PC-3 (cell line): ENCODE measurements at regions of chr10 and their contacts with region 1.

Region 1: DNA sequence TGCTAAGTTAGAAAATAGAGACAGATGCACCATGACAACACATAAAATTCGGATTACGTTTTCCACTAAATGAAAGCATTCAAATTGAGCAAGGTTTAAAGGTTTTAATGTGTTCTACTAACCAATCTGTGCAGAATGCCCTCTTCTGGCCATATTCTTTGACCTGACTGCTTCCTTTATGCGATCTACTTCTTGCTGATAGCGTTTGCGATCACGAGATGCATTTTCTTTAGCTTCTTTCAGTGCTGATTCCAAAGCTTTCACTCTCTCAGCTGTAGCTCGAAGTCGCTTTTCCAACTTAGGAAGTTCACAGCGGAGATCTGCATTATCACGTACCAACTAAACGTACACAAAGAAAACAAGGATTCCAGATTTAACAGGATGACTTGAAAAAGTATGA is 39.2 kb downstream of the KIF5B start:
- DNase-seq: no peak
- ATAC-seq: no peak
- H3K4me3 ChIP-seq: no peak overlapping the region
- H3K27ac ChIP-seq: no peak overlapping the region
- H3K4me1 ChIP-seq: no peaks in the 10 kb centered on the region
- H3K27me3 ChIP-seq: no peaks in the 10 kb centered on the region
- CTCF ChIP-seq: no peak

Region 2: DNA sequence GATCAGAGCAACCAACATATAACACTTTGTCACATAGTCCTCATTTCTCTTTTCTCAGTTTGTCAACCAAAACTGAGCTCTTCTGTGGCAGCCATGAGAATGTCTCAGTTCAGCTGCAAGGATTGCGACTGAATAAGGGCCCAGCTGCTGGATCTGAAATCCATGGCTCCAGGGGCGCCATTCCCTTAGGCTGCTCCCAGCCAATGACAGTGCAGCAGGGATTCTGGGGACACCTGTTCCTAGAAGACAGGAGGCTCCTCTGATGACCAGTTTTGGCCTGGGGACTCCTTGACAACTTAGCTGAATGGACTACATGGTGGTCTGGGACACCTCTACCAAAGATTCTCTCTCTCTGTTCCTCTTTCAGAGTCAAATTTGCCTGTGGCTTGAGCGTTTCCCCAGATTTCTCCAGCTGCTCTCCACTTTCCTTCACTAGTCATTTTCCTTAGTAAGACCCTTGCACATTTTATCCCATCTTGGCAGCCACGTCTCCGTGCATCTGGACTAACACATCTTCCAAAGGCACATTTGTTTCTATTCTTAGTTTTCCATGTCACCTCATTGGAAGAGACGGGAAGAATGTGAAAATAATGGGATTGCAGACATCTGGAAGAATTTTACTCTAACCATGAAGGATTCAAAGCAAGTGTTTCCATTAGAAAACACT is 67.3 kb after region 1 on chr10:
- CTCF ChIA-PET with region 1: no interaction called
- POLR2A ChIA-PET with region 1: no interaction called
- intact Hi-C with region 1: no loop called
- DNase-seq: no peak
- ATAC-seq: no peak
- H3K4me3 ChIP-seq: no peak overlapping the region
- H3K27ac ChIP-seq: no peak overlapping the region
- H3K4me1 ChIP-seq: no peaks in the 10 kb centered on the region
- H3K27me3 ChIP-seq: no peaks in the 10 kb centered on the region
- CTCF ChIP-seq: no peak

Region 3: GRCh38 chr10:32131388-32131787 is 114.4 kb after region 1 on chr10:
- CTCF ChIA-PET with region 1: no interaction called
- POLR2A ChIA-PET with region 1: interaction called, 10 read pairs
- intact Hi-C with region 1: no loop called
- DNase-seq: peak; percentile 46
- ATAC-seq: no peak
- H3K4me3 ChIP-seq: no peak overlapping the region
- H3K27ac ChIP-seq: no peak overlapping the region
- H3K4me1 ChIP-seq: peaks cover 12% of the 10 kb centered on the region
- H3K27me3 ChIP-seq: no peaks in the 10 kb centered on the region
- CTCF ChIP-seq: no peak